Thyroid gland (tissue), 4 donors: ENCODE measurements at regions of chr1 and their contacts with region 1.

Region 1: GRCh38 chr1:94061513-94062443 is 59.2 kb downstream of the ABCA4 start:
- DNase-seq: peak; percentile 84
- H3K4me3 ChIP-seq: no peak overlapping the region
- H3K27ac ChIP-seq: peak overlapping the region in 2 of 3 donors; percentile 19 to 36
- H3K4me1 ChIP-seq: peaks cover 16 to 41% of the 10 kb centered on the region in 2 donors
- H3K27me3 ChIP-seq: no peaks in the 10 kb centered on the region
- CTCF ChIP-seq: peak; percentile 81 to 99 (median 92)
- POLR2A ChIP-seq: no peak

Region 2: GRCh38 chr1:94237291-94238226 is 175.8 kb after region 1 on chr1 and contains the start of gene ARHGAP29:
- intact Hi-C with region 1: loop called (anchors 5 kb)
- DNase-seq: peak; percentile 90
- H3K4me3 ChIP-seq: peak within 1 kb of the TSS; percentile 11 to 95 (median 85)
- H3K27ac ChIP-seq: peak within 1 kb of the TSS; percentile 90 to 98 (median 98)
- H3K4me1 ChIP-seq: peaks cover 11 to 21% of the 10 kb centered on the region in 2 donors
- H3K27me3 ChIP-seq: no peaks in the 10 kb centered on the region
- CTCF ChIP-seq: peak in 4 of 6 experiments; percentile 17 to 32 (median 24)
- POLR2A ChIP-seq: peak; percentile 96 to 100
- total RNA-seq, gene ARHGAP29: 56.2 to 115 (median 77.7) TPM

Region 3: DNA sequence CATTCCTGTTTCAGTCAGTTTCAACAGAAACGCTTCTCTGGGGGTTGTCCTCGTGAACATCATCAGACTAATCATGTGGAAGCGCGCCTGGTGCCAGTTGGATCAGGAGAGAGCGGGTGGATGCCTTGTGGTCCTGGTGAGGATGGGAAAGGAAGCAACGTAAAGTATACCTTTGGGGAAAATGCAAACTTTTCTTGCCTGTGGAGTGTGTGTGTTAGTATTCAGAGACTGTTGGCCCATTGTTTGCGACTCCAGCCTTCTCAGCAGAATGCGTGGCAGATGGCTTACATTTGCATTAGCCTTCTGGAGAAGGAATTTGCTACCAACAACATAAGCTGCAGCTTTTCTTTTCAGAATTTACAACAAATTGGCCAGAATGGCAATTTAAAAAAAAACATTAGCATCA is 1346.1 kb after region 1 on chr1:
- intact Hi-C with region 1: no loop called
- DNase-seq: no peak
- H3K4me3 ChIP-seq: no peak overlapping the region
- H3K27ac ChIP-seq: no peak overlapping the region
- H3K4me1 ChIP-seq: no peaks in the 10 kb centered on the region
- H3K27me3 ChIP-seq: no peaks in the 10 kb centered on the region
- CTCF ChIP-seq: no peak
- POLR2A ChIP-seq: no peak